Dorsolateral prefrontal cortex (tissue), 120 donors: ENCODE measurements at regions of chr10 and their contacts with region 1.

Region 1: DNA sequence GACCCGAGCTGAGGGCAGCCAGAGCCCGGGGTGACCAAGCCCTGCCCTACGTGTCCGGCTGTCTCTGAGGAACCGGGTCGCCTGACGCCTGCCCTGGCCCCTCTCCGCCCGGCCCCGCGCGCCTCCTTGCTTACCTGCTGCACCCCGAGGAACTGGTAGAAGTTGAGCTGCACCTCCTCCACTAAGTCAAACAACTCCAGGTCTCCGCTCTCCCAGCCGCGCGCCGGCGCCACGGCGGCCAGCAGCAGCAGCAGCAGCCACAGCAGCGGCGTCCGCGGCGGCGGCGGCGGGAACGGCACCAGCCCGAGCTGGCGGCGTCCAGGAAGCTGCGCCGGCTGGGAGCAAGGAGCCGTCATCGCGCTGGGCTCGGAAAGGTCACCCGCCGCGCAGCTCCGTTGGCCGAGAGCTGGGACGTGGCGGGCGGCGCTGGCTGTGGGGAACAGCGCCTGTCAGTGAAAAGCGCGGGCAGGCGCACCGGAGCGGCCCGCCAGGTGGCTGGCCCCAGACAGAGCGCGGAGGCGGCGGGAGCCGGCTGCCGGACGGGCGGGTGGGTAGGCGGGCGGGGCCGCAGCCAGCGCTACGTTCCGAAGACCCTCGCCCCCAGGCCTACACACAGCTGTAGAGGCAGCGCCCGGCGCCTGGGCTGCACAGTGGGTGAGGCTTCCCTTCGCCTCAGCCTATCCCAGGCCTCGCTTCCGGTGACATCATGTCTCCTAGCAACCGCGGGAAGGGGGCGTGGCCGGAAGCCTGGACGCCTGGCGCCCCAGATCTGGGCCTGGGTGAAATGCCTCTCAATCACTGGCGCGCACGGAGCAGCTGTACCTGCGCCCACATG is at the start of gene DNAJC1:
- DNase-seq: peak; percentile 96 to 99 (median 98)
- H3K4me3 ChIP-seq: peak within 1 kb of the TSS; percentile 68 to 95 (median 83)
- H3K27ac ChIP-seq: peak within 1 kb of the TSS; percentile 49 to 95 (median 88)
- H3K27me3 ChIP-seq: no peaks in the 10 kb centered on the region
- CTCF ChIP-seq: peak in 39 of 56 donors; percentile 3 to 55 (median 26)
- total RNA-seq, gene DNAJC1: 9.1 to 29.3 (median 17.3) TPM

Region 2: GRCh38 chr10:22158426-22158825 is 155.1 kb after region 1 on chr10:
- intact Hi-C with region 1: no loop called
- DNase-seq: no peak
- H3K4me3 ChIP-seq: no peak overlapping the region
- H3K27ac ChIP-seq: no peak overlapping the region
- H3K27me3 ChIP-seq: peaks cover 0 to 6% (median 0%) of the 10 kb centered on the region in 45 donors
- CTCF ChIP-seq: no peak

Region 3: GRCh38 chr10:22228943-22229801 is 225.9 kb after region 1 on chr10:
- intact Hi-C with region 1: loop called (anchors 5 kb)
- DNase-seq: peak; percentile 76 to 91 (median 84)
- H3K4me3 ChIP-seq: peak overlapping the region; percentile 55 to 93 (median 78)
- H3K27ac ChIP-seq: peak overlapping the region; percentile 73 to 100 (median 98)
- H3K27me3 ChIP-seq: no peaks in the 10 kb centered on the region
- CTCF ChIP-seq: peak in 15 of 56 donors; percentile 4 to 34 (median 15)

Region 4: DNA sequence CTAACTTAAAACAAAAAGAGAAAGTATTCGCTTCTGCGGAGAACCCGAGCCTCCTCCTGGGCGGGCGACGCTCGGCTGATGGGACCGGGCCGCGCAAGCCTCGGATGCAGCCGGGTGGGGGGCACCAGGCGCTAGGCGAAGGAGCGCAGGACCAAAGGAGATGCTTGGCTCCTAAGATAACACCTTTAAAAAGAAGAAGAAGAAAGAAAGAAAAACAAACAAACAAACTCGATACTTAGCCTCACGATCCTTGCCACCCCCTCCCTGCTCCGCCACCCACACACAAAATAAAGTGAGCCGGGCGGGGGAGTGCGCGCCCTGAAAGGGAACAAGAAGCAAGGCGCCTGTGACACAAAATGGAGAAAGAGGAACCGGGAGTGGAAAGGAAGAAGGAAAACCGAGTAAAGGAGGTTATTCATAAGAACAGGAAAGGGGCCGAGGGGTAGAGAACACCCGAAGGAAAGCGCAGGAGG is 248.5 kb after region 1 on chr10:
- intact Hi-C with region 1: loop called (anchors 2 to 5 kb)
- DNase-seq: peak; percentile 28 to 68 (median 64)
- H3K4me3 ChIP-seq: peak overlapping the region; percentile 56 to 96 (median 81)
- H3K27ac ChIP-seq: peak overlapping the region; percentile 97 to 100 (median 99)
- H3K27me3 ChIP-seq: no peaks in the 10 kb centered on the region
- CTCF ChIP-seq: peak in 1 of 56 donors; percentile 11

Region 5: DNA sequence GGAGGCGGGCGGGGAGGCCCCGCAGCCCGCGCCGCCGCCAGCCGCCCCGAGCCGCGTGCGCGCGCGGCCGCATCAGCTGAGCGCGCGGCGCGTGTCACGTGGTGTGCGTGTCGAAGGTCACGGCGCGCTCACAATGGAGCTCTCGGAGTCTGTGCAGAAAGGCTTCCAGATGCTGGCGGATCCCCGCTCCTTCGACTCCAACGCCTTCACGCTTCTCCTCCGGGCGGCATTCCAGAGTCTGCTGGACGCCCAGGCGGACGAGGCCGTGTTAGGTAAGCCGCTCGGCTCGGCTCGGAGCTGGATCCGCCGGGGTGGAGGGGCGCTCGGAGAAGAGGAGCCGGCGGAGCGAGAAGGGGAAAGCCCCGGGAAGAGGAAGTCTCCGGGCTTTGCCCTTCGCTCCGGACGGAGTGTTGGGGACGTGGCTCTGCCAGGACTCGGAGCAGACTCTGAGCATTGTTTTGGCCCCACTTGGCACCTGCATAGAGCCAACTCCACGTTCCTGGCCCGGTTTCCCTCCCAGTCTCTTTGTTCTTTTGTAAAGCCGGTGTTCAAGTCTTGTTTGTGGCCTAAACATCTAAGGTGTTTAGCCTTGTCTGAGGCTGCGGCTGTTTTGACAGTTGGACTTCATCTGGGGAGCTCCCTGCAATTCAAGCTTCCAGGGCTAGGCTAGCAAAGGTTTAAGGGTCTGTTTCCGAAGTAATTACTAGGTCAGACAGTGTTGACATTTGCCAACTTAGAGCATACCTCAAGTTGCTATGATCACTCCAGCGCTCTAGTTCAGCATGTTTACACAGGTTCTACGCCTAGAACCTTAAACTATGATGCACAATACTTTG is 313.2 kb after region 1 on chr10 and contains the start of gene COMMD3:
- intact Hi-C with region 1: loop called in 1 of 2 experiments (anchors 5 kb)
- DNase-seq: peak; percentile 78 to 91 (median 88)
- H3K4me3 ChIP-seq: peak within 1 kb of the TSS; percentile 63 to 98 (median 90)
- H3K27ac ChIP-seq: peak within 1 kb of the TSS; percentile 90 to 99 (median 97)
- H3K27me3 ChIP-seq: no peaks in the 10 kb centered on the region
- CTCF ChIP-seq: peak in 2 of 56 donors; percentile 2 to 25
- total RNA-seq, gene COMMD3: 26.2 to 65.4 (median 41.7) TPM

Region 6: GRCh38 chr10:22334414-22335172 is 331.3 kb after region 1 on chr10:
- intact Hi-C with region 1: loop called in 1 of 2 experiments (anchors 5 kb)
- DNase-seq: no peak
- H3K4me3 ChIP-seq: peak overlapping the region; percentile 7 to 77 (median 62)
- H3K27ac ChIP-seq: peak overlapping the region in 53 of 59 donors; percentile 16 to 89 (median 78)
- H3K27me3 ChIP-seq: peaks cover 0 to 64% (median 37%) of the 10 kb centered on the region in 45 donors
- CTCF ChIP-seq: no peak

Region 7: DNA sequence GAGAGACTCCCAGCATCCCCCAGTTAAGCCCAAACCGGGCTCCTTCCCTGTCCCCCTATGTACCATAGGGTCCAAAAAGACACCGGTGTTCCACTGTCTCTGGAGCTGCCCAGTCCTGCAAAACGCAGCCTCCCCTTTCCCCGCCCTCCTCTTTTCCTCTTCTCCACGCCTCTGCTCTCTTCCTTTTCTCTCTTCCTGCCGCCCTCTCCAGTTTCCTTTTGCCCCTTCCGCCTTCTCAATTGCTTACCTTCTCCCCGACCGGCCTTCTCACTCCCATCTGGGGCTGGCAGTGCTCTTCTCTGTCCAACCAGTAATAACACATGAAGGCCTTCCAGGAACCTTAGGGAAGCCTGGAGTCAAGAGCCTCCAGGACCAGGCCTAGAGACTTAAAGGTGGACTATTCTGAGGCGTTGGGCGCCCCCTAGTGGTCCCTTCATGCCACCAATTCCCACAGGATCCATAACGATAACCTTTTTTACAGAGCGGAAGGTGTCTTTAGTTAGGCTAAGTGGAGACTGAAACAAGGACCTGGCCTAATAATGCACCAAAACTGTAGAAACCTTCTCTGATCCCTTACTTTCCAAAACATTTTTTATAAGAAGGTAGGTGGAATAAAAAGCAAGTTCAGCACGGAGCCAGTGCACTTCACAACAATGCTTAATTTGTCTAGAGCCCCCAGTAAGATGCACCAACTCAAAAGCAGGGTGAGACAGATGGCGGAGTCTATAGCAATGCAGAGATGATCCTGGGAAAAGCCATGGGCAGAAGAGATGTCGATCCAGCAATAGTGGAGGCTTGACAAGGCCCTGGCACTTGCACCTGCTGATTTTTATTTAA is 1064.9 kb after region 1 on chr10:
- intact Hi-C with region 1: loop called (anchors 5 kb)
- DNase-seq: peak; percentile 63 to 89 (median 80)
- H3K4me3 ChIP-seq: no peak overlapping the region
- H3K27ac ChIP-seq: peak overlapping the region in 23 of 59 donors; percentile 2 to 79 (median 40)
- H3K27me3 ChIP-seq: no peaks in the 10 kb centered on the region
- CTCF ChIP-seq: peak; percentile 65 to 96 (median 85)